ENCODE measurements at regions of chr20 and their contacts with region 1.

Region 1: DNA sequence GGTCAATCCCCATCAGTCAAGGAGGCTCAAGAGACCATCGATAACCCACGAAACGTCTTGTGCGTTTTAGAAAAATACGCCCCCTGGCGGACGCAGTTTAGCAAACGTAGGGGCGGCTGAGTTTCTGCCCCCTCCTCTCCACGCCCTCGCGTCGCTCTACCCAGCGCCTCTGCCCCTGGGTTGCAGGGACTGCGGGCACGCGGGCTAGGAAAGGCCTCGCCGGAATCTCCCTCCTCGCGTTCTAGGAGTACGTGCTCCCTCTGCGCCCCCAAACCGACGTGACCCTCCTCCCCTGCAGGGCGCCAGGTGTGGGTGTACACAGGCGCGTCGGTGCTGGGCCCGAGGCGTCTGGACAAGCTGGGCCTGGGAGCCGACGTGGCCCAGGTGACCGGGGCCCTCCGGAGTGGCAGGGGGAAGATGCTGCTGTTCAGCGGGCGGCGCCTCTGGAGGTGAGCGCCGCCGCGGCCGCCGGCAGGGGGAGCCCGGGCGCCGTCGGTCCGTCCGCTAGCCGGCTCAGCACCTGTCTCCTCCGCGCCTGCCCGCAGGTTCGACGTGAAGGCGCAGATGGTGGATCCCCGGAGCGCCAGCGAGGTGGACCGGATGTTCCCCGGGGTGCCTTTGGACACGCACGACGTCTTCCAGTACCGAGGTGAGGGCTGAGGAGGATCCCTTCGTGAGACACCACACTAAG is 5.3 kb downstream of the MMP9 start:
- DNase-seq: peak; percentile 76 to 85 (median 80)
- H3K4me3 ChIP-seq: peak overlapping the region in 2 of 7 experiments; percentile 19 to 50
- H3K27ac ChIP-seq: no peak overlapping the region
- H3K4me1 ChIP-seq: peaks cover 0 to 31% (median 15%) of the 10 kb centered on the region in 4 experiments
- H3K27me3 ChIP-seq: peaks cover 0 to 62% (median 31%) of the 10 kb centered on the region in 5 experiments

Region 2: DNA sequence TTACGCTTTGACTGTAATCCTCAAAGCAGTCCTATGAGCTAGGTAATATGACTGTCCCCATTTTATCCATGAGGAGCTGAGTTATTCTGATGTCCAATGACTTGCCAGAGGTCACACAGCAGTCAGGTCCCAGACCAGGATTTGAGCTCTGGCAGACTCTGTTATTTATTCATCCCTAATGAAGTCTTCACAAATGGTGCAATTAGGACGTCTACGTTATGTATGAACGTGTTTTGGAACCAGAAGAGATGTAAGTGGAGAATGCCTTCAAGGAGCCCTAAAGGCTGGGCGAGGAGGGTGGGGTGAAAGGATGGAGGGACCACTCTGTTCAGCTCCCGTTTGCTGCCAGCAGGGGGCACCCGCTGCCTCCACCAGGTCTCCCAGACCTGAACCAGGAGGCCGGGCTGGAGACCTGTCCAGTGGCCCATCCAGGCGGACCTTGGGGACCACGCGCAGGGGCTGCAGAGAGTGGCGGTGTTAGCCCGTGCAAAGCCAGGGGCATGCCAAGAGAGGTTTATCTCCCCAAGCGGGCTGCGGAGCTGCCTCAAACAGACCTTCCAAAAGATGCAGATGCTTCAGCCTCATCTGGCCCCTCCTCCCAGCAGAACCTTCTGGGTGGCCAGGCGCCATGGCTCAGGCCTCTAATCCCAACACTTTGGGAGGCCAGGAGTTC is 26.7 kb before region 1 on chr20:
- CTCF ChIA-PET with region 1: interaction called, 656 read pairs
- POLR2A ChIA-PET with region 1: interaction called, 4 read pairs
- DNase-seq: peak; percentile 71 to 80 (median 77)
- H3K4me3 ChIP-seq: no peak overlapping the region
- H3K27ac ChIP-seq: no peak overlapping the region
- H3K4me1 ChIP-seq: peaks cover 0 to 4% (median 0%) of the 10 kb centered on the region in 4 experiments
- H3K27me3 ChIP-seq: peaks cover 0 to 13% (median 6%) of the 10 kb centered on the region in 5 experiments

Region 3: GRCh38 chr20:46057856-46058598 is 44.1 kb after region 1 on chr20:
- CTCF ChIA-PET with region 1: interaction called, 16 read pairs
- POLR2A ChIA-PET with region 1: interaction called, 3 read pairs
- DNase-seq: peak; percentile 38 to 64 (median 55)
- H3K4me3 ChIP-seq: peak overlapping the region in 5 of 7 experiments; percentile 30 to 53 (median 48)
- H3K27ac ChIP-seq: no peak overlapping the region
- H3K4me1 ChIP-seq: peaks cover 12 to 51% (median 35%) of the 10 kb centered on the region in 4 experiments
- H3K27me3 ChIP-seq: peaks cover 0 to 57% (median 20%) of the 10 kb centered on the region in 5 experiments

Region 4: GRCh38 chr20:46078954-46079353 is 65.0 kb after region 1 on chr20:
- CTCF ChIA-PET with region 1: interaction called, 10 read pairs
- POLR2A ChIA-PET with region 1: no interaction called
- DNase-seq: no peak
- H3K4me3 ChIP-seq: no peak overlapping the region
- H3K27ac ChIP-seq: no peak overlapping the region
- H3K4me1 ChIP-seq: peaks cover 0 to 10% (median 4%) of the 10 kb centered on the region in 4 experiments
- H3K27me3 ChIP-seq: no peaks in the 10 kb centered on the region

Region 5: DNA sequence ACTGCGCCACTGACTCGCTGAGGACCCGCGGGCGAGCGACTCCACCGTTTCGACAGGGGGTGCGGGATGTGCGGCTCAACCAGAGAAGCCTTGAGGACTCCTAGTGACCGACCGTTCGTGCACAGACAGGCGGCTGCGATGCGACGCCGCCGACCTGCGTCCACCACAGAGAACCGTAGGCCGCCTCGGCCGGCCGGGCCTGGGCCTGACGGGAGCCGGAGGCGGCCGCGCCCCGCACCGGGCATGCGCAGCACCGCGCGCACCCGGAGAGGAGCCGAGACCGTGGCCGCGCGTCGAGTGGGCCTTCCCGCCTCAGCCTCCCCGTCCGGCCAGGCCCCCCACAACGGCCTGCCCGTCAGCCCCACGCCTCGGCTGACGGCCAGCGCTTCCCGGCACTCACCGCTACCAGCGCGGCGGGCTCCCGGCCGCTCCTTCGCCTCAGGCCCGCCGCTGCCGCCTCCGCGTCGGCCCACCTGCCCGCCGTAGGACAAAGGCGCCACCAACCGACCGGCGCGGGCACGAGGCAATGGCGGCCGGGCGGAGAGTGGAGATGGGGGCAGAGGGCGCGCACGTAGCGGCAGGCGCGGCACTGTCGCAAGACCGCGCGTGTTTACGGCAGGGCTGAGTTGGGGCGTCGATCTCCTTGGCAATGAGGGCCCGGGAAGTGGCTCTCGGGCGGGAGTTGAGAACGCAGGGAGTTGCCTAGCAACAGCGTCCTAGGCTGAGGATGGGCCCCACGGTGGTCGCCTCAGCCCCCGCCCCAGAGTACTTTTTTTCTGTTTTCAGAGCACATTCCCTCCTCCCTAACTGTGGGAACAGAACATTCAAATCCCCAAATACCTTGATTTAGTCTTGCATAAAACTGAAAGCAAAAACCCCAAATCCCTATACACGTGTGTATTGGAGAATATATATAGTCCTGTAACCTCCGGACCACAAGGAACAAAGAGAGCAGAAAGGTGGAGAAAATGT is 75.7 kb after region 1 on chr20 and contains the start of gene NCOA5:
- CTCF ChIA-PET with region 1: interaction called, 10 read pairs
- POLR2A ChIA-PET with region 1: no interaction called
- DNase-seq: peak; percentile 95 to 97 (median 96)
- H3K4me3 ChIP-seq: peak within 1 kb of the TSS; percentile 68 to 96 (median 87)
- H3K27ac ChIP-seq: peak within 1 kb of the TSS; percentile 75 to 87
- H3K4me1 ChIP-seq: peaks cover 11 to 38% (median 19%) of the 10 kb centered on the region in 4 experiments
- H3K27me3 ChIP-seq: no peaks in the 10 kb centered on the region